CD8-positive, alpha-beta T cell (primary cell): ENCODE measurements at regions of chr2 and their contacts with region 1.

Region 1: GRCh38 chr2:135925571-135925970 is 49.3 kb upstream of the MCM6 start:
- DNase-seq: no peak
- ATAC-seq: no peak
- H3K4me3 ChIP-seq: no peak overlapping the region
- H3K4me3 Mint-ChIP-seq: no peak overlapping the region
- H3K27ac ChIP-seq: no peak overlapping the region
- H3K27ac Mint-ChIP-seq: no peak overlapping the region
- H3K4me1 ChIP-seq: no peaks in the 10 kb centered on the region
- H3K4me1 Mint-ChIP-seq: no peaks in the 10 kb centered on the region
- H3K27me3 ChIP-seq: no peaks in the 10 kb centered on the region
- H3K27me3 Mint-ChIP-seq: no peaks in the 10 kb centered on the region
- CTCF ChIP-seq: no peak

Region 2: GRCh38 chr2:135557530-135557929 is 368.0 kb before region 1 on chr2:
- CTCF ChIA-PET with region 1: no interaction called
- POLR2A ChIA-PET with region 1: no interaction called
- intact Hi-C with region 1: no loop called
- DNase-seq: no peak
- ATAC-seq: no peak
- H3K4me3 ChIP-seq: no peak overlapping the region
- H3K4me3 Mint-ChIP-seq: no peak overlapping the region
- H3K27ac ChIP-seq: no peak overlapping the region
- H3K27ac Mint-ChIP-seq: no peak overlapping the region
- H3K4me1 ChIP-seq: no peaks in the 10 kb centered on the region
- H3K4me1 Mint-ChIP-seq: peaks cover 19% of the 10 kb centered on the region
- H3K27me3 ChIP-seq: no peaks in the 10 kb centered on the region
- H3K27me3 Mint-ChIP-seq: no peaks in the 10 kb centered on the region
- CTCF ChIP-seq: no peak

Region 3: GRCh38 chr2:135904341-135904989 is 21.1 kb before region 1 on chr2:
- CTCF ChIA-PET with region 1: no interaction called
- POLR2A ChIA-PET with region 1: no interaction called
- intact Hi-C with region 1: no loop called
- DNase-seq: no peak
- ATAC-seq: no peak
- H3K4me3 ChIP-seq: no peak overlapping the region
- H3K4me3 Mint-ChIP-seq: no peak overlapping the region
- H3K27ac ChIP-seq: no peak overlapping the region
- H3K27ac Mint-ChIP-seq: no peak overlapping the region
- H3K4me1 ChIP-seq: no peaks in the 10 kb centered on the region
- H3K4me1 Mint-ChIP-seq: no peaks in the 10 kb centered on the region
- H3K27me3 ChIP-seq: no peaks in the 10 kb centered on the region
- H3K27me3 Mint-ChIP-seq: no peaks in the 10 kb centered on the region
- CTCF ChIP-seq: no peak

Region 4: GRCh38 chr2:135948642-135949355 is 23.2 kb after region 1 on chr2:
- CTCF ChIA-PET with region 1: no interaction called
- POLR2A ChIA-PET with region 1: no interaction called
- intact Hi-C with region 1: no loop called
- DNase-seq: peak in 6 of 9 experiments; percentile 10 to 62 (median 25)
- ATAC-seq: peak; percentile 72
- H3K4me3 ChIP-seq: no peak overlapping the region
- H3K4me3 Mint-ChIP-seq: peak overlapping the region; percentile 37
- H3K27ac ChIP-seq: peak overlapping the region in 1 of 2 experiments; percentile 26
- H3K27ac Mint-ChIP-seq: peak overlapping the region; percentile 85
- H3K4me1 ChIP-seq: peaks cover 7% of the 10 kb centered on the region
- H3K4me1 Mint-ChIP-seq: peaks cover 61% of the 10 kb centered on the region
- H3K27me3 ChIP-seq: no peaks in the 10 kb centered on the region
- H3K27me3 Mint-ChIP-seq: no peaks in the 10 kb centered on the region
- CTCF ChIP-seq: no peak

Region 5: DNA sequence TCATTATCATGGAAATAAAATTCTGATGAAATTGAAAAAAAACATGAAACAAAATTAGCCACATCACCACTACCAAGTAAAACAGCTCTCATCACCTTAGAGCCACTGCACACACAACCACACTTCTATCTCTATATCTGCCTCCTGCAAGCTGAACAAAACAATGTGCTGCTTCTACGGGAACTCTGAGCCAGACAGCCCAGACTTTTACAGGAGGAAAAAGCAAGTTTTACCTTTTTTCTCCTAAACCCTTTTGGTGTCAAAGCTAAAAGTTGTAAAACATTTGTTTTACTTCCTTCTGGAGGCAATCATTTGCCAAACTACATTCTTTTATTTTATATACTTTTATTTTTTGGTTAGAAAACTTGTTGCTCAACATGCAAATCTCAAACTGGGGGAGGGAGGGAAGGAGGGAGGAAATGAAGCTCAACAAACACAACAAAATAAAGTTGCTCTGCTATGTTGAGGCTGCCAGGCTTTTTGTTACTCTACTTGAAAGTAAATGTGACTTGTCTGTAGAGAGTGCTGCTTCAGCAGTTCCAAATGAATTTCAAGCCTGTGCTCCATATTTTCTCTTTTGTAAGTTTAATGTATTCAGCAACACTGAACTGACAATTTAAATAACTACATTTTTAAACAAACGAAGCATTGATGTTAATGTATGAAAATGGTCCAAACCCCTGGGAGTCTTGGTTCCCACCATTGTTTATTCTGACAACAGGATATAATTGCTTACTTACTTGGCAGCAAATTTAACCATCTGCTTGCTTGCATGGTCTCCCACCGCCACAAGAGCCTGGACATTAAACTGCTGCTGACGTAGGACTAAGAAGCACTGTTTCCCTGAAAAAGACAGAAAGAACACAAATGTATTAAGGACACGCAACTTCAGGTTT is 35.3 kb after region 1 on chr2:
- CTCF ChIA-PET with region 1: no interaction called
- POLR2A ChIA-PET with region 1: no interaction called
- intact Hi-C with region 1: loop called in 1 of 2 experiments (anchors 5 kb)
- DNase-seq: peak in 3 of 9 experiments; percentile 23 to 44 (median 27)
- ATAC-seq: peak; percentile 63
- H3K4me3 ChIP-seq: no peak overlapping the region
- H3K4me3 Mint-ChIP-seq: peak overlapping the region; percentile 35
- H3K27ac ChIP-seq: peak overlapping the region in 1 of 2 experiments; percentile 52
- H3K27ac Mint-ChIP-seq: peak overlapping the region; percentile 89
- H3K4me1 ChIP-seq: peaks cover 26% of the 10 kb centered on the region
- H3K4me1 Mint-ChIP-seq: peaks cover 50% of the 10 kb centered on the region
- H3K27me3 ChIP-seq: no peaks in the 10 kb centered on the region
- H3K27me3 Mint-ChIP-seq: no peaks in the 10 kb centered on the region
- CTCF ChIP-seq: no peak

Region 6: GRCh38 chr2:135974036-135974435 is 48.5 kb after region 1 on chr2:
- CTCF ChIA-PET with region 1: no interaction called
- POLR2A ChIA-PET with region 1: no interaction called
- intact Hi-C with region 1: loop called in 1 of 2 experiments (anchors 10 kb)
- DNase-seq: no peak
- ATAC-seq: no peak
- H3K4me3 ChIP-seq: no peak overlapping the region
- H3K4me3 Mint-ChIP-seq: no peak overlapping the region
- H3K27ac ChIP-seq: no peak overlapping the region
- H3K27ac Mint-ChIP-seq: no peak overlapping the region
- H3K4me1 ChIP-seq: no peaks in the 10 kb centered on the region
- H3K4me1 Mint-ChIP-seq: peaks cover 64% of the 10 kb centered on the region
- H3K27me3 ChIP-seq: no peaks in the 10 kb centered on the region
- H3K27me3 Mint-ChIP-seq: no peaks in the 10 kb centered on the region
- CTCF ChIP-seq: no peak

Region 7: DNA sequence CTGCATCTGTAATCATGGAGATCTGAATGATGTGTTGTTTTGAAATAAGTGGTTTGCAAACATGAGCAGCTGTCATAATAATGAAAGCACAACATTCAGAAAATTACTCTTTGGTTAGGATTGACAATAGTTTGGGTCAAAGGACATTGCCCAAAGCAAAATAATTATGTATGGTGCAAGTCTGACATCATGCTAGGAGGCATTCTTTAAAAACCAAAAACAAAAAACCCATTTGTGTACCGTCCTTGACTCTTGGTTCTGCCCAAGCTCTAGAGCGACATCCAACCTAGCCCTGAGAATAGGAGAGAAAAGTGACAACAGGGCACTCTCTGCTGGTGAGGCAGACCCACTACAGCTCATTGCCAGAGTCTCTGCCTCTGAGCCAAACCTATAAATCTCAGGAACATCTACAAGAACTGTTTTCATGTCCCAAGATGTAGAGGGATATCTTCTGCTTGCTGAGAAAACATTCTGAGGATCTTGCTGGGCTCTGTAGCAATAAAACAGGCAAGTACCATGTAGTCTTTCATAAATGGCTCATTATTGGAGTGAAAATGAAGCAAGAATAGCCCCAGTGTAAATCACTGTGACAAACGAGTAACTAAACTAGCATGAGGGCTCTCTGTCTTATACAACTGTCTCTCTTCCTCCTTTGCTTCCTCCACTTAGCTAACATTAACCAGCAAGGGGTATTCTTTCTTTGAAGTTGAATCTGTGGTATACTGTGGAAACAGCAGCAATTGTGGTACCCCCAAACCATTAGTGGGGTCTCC is 459.1 kb after region 1 on chr2:
- CTCF ChIA-PET with region 1: interaction called, 21 read pairs
- POLR2A ChIA-PET with region 1: no interaction called
- intact Hi-C with region 1: no loop called
- DNase-seq: peak in 8 of 9 experiments; percentile 32 to 82 (median 60)
- ATAC-seq: peak; percentile 53
- H3K4me3 ChIP-seq: no peak overlapping the region
- H3K4me3 Mint-ChIP-seq: no peak overlapping the region
- H3K27ac ChIP-seq: no peak overlapping the region
- H3K27ac Mint-ChIP-seq: peak overlapping the region; percentile 69
- H3K4me1 ChIP-seq: peaks cover 25% of the 10 kb centered on the region
- H3K4me1 Mint-ChIP-seq: peaks cover 36% of the 10 kb centered on the region
- H3K27me3 ChIP-seq: no peaks in the 10 kb centered on the region
- H3K27me3 Mint-ChIP-seq: no peaks in the 10 kb centered on the region
- CTCF ChIP-seq: peak; percentile 77

Region 8: GRCh38 chr2:136665736-136666135 is 740.2 kb after region 1 on chr2:
- CTCF ChIA-PET with region 1: no interaction called
- POLR2A ChIA-PET with region 1: no interaction called
- intact Hi-C with region 1: loop called in 1 of 2 experiments (anchors 10 kb)
- DNase-seq: no peak
- ATAC-seq: no peak
- H3K4me3 ChIP-seq: no peak overlapping the region
- H3K4me3 Mint-ChIP-seq: no peak overlapping the region
- H3K27ac ChIP-seq: no peak overlapping the region
- H3K27ac Mint-ChIP-seq: no peak overlapping the region
- H3K4me1 ChIP-seq: no peaks in the 10 kb centered on the region
- H3K4me1 Mint-ChIP-seq: no peaks in the 10 kb centered on the region
- H3K27me3 ChIP-seq: no peaks in the 10 kb centered on the region
- H3K27me3 Mint-ChIP-seq: peaks cover 11% of the 10 kb centered on the region
- CTCF ChIP-seq: no peak